ENCODE measurements at regions of chr15 and their contacts with region 1.

Region 1: DNA sequence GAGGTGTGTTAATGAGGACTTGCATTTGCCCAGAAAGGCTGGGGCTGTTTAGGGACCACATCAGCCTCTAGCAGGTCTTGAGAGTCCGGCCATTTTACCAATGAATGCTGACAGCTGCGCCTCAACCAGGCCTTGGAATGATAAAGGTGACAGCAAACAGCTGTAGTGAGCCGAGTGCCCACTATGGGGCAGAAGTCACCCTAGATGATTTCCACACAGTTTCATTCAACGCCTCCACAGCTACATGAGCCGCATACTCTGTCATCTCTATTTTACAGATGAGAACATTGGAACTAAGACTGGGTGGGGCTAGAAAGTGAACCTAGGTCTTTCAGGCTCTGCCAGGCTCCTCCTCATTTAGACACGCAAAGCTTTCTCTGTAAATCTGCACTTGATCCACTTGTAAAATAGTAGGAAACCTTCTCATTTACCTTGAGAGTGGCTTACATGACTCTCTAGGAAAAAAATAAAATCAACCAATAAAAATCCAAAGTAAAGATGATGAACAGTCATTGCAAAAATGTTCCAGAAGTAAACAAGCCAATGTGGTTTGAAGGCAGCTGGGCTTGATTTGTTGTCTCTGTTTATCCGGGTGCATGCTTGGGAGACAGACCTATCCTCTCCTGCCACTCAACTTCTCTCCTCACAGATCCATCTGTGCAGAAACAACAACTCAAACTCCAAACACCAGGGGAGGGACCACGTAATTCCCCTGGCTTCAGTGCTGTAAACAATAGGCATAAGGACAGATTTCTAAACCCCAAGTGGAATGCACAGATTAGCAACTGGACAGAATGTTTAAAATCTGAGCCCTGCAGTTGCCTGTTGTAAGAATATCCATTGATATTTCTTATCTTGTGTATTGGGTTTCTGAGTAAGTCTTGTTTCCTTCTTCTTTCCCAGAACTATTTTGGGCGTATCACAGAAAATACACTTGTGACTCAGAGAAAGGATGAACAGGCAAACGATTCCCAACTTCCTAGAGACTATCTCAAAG is 31.5 kb upstream of the LDHAL6B start:
- DNase-seq: peak in 3 of 4 donors; percentile 23 to 60 (median 37)
- ATAC-seq: peak; percentile 89
- H3K4me3 ChIP-seq: no peak overlapping the region
- H3K27ac ChIP-seq: peak overlapping the region; percentile 74 to 81
- H3K4me1 ChIP-seq: peaks cover 0 to 22% of the 10 kb centered on the region in 2 donors
- H3K27me3 ChIP-seq: no peaks in the 10 kb centered on the region
- CTCF ChIP-seq: peak; percentile 38 to 55

Region 2: DNA sequence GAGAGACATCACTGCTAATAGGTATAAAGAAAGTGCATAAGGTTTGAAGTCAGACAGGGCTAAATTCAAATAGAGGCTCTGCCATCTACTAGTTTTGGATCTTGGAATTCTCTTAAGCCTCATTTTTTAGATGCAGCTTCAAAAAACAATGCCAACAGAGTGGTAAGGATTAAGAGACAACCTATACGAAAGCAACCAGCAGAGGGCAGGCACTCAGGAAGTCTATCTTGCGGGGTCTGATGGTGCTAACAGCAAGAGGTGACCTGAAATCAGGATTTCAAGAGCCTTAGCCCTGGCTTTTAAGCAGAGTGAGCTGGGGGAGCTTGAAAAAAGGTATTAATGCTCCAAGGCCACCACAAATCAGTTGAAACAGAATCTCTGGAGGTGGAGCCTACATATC is 72.2 kb after region 1 on chr15:
- intact Hi-C with region 1: loop called in 1 of 2 experiments (anchors 10 kb)
- DNase-seq: peak in 3 of 4 donors; percentile 17 to 69 (median 47)
- ATAC-seq: peak; percentile 93
- H3K4me3 ChIP-seq: no peak overlapping the region
- H3K27ac ChIP-seq: no peak overlapping the region
- H3K4me1 ChIP-seq: no peaks in the 10 kb centered on the region
- H3K27me3 ChIP-seq: no peaks in the 10 kb centered on the region
- CTCF ChIP-seq: peak in 1 of 2 donors; percentile 53

Region 3: DNA sequence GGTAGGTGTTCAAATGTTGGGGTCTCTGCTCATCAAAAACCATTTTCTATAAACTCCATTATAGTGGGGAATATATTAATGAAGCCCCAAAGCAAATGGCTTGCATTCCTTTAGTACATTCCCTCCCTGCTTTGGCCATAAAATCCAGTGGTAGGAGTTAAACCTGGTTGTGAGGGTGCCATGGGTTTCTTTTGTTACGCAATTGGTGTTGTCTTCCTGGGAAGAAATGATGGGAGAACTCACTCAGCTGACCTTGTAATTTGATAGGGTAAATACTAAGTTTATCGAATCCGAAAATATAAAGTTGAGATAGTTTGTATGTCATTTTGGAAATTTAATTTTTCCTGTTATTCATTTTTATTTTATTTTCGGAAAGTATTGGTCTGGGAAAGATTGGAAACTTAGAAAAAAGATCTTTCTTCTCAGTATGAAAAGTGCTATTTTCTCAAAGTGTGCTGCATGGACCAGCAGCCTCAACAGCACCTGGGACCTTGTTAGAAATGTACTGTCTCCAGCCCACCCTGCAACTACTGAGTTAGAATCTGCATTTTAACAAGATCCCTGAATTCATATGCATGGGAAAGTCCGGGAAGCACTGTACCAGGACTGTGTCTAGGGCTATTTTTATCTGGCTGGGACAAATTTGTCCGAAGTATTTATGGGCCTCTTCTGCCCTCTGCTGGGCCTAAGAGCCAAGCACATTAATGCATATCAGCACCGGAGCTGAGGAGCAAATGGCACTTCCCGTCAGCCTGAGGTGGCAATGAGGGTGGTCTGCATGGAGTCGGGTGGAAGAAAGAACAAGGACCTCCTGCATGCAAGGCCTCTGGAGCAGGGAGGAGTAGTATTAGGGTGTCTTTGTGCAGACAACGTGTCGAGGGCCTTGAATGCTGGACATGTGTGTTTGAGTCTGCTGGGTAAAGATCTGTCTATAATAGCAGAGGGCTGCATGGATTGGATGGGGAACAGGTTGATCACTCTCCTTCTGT is 317.6 kb after region 1 on chr15:
- intact Hi-C with region 1: loop called in 1 of 2 experiments (anchors 10 kb)
- DNase-seq: peak in 3 of 4 donors; percentile 48 to 79 (median 69)
- ATAC-seq: peak; percentile 100
- H3K4me3 ChIP-seq: no peak overlapping the region
- H3K27ac ChIP-seq: no peak overlapping the region
- H3K4me1 ChIP-seq: peaks cover 0 to 3% of the 10 kb centered on the region in 2 donors
- H3K27me3 ChIP-seq: no peaks in the 10 kb centered on the region
- CTCF ChIP-seq: peak; percentile 70 to 82

Measured in left lung (tissue), 14 donors.